Lower lobe of right lung (tissue), 2 donors: ENCODE measurements at regions of chr6 and their contacts with region 1.

Region 1: GRCh38 chr6:139375232-139376016 is 976 bp upstream of the CITED2 start:
- DNase-seq: peak; percentile 94
- ATAC-seq: peak; percentile 86 to 91
- H3K4me3 ChIP-seq: peak overlapping the region; percentile 93
- H3K27ac ChIP-seq: peak overlapping the region; percentile 99
- H3K4me1 ChIP-seq: peaks cover 28% of the 10 kb centered on the region
- H3K27me3 ChIP-seq: no peaks in the 10 kb centered on the region
- CTCF ChIP-seq: no peak

Region 2: DNA sequence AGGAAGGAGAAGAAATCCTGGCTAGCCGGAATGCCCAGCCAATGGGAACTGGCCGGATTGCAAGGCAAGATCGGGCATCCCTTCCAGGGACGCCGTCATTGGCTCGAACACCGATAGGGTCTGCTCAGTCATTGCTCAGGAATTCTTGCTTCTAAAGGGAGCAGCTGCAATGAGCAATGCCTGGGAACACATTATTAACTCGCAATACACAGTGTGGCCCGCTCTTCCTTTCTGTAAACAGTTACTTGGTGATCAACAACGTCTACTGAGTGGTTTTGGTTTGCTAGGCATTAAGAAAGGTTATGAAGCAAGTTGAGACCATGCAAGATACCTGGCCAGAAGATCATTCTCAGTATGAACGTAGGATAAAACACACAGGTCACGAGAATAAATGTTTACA is 164.4 kb after region 1 on chr6:
- intact Hi-C with region 1: loop called (anchors 10 kb)
- DNase-seq: peak; percentile 69
- ATAC-seq: peak; percentile 88 to 89
- H3K4me3 ChIP-seq: no peak overlapping the region
- H3K27ac ChIP-seq: peak overlapping the region; percentile 63
- H3K4me1 ChIP-seq: peaks cover 37% of the 10 kb centered on the region
- H3K27me3 ChIP-seq: no peaks in the 10 kb centered on the region
- CTCF ChIP-seq: no peak

Region 3: GRCh38 chr6:139753198-139753861 is 377.9 kb after region 1 on chr6:
- intact Hi-C with region 1: loop called (anchors 10 kb)
- DNase-seq: no peak
- ATAC-seq: no peak
- H3K4me3 ChIP-seq: no peak overlapping the region
- H3K27ac ChIP-seq: no peak overlapping the region
- H3K4me1 ChIP-seq: peaks cover 8% of the 10 kb centered on the region
- H3K27me3 ChIP-seq: no peaks in the 10 kb centered on the region
- CTCF ChIP-seq: no peak